ENCODE measurements at regions of chr15 and their contacts with region 1.

Region 1: GRCh38 chr15:20367093-20367492 is 174.5 kb downstream of the GOLGA6L6 start:
- DNase-seq: no peak
- H3K4me3 Mint-ChIP-seq: no peak overlapping the region
- H3K27ac Mint-ChIP-seq: no peak overlapping the region
- H3K4me1 Mint-ChIP-seq: no peaks in the 10 kb centered on the region
- H3K27me3 Mint-ChIP-seq: no peaks in the 10 kb centered on the region

Region 2: GRCh38 chr15:20340931-20341661 is 26.0 kb before region 1 on chr15:
- intact Hi-C with region 1: no loop called
- DNase-seq: no peak
- H3K4me3 Mint-ChIP-seq: no peak overlapping the region
- H3K27ac Mint-ChIP-seq: no peak overlapping the region
- H3K4me1 Mint-ChIP-seq: no peaks in the 10 kb centered on the region
- H3K27me3 Mint-ChIP-seq: no peaks in the 10 kb centered on the region

Region 3: DNA sequence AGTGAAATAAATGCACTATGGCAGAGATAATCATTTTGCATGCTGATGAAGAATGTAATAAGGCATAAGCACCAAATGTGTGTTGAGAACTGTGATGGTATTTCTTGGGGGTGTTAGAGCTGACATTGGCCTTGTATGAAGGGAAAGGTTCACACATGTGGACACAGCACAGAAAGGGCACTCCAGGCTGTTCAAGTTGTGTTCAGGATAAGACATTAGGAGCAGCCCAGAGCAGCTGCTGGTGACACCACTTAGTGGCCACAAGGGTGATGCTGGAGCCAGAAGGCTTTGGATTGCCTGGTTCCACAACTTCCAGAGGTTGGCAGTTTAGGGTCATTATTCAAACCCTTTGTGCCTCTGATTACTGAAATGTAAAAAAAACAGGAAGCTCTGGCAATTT is 19.1 kb after region 1 on chr15:
- intact Hi-C with region 1: loop called (anchors 2 kb)
- DNase-seq: no peak
- H3K4me3 Mint-ChIP-seq: no peak overlapping the region
- H3K27ac Mint-ChIP-seq: no peak overlapping the region
- H3K4me1 Mint-ChIP-seq: no peaks in the 10 kb centered on the region
- H3K27me3 Mint-ChIP-seq: no peaks in the 10 kb centered on the region

Region 4: DNA sequence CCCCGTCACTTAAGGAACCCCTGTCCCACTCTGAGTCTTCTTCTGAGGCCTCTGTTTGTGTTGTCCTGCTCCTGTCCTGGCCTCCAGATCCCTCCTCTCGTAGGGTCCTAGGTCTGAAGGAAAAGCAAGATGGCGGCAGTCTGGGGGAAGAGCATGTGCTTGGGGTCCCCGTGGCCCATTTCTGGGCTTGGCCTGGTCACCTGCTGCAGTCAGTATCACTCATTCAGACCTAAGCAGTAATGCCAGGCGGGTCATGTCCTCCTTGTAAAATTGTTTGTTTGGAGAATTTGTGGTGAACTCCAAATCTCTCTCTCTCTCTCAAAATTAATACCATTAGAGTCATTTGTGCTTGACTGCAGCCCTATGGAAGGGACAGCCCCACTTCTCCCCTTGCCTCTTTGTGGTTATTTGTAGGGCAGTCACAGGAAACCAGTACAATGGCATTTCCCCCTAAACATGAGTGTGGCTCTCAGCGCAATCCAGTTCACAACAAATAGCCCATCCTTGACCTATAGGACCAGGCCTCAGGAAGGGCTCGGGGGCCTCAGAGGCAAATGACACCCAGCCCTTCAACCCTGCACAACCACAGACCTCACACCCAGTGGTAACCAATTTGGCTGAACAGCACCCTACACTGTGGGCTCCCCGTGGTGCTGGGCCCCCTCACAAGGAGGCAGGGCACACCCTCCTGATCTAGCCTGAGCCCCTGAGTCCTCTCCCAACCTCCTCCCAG is 1886.7 kb after region 1 on chr15:
- intact Hi-C with region 1: loop called (anchors 5 kb)
- DNase-seq: no peak
- H3K4me3 Mint-ChIP-seq: no peak overlapping the region
- H3K27ac Mint-ChIP-seq: no peak overlapping the region
- H3K4me1 Mint-ChIP-seq: peaks cover 18% of the 10 kb centered on the region
- H3K27me3 Mint-ChIP-seq: peaks cover 14% of the 10 kb centered on the region

Measured in activated T-helper 1 cell treated with anti-CD3 and anti-CD28 coated beads, Interleukin-12 subunit alpha, Interleukin-12 subunit beta, Interleukin-2, Interleukin-4 antibody, amounts not matched to agents 30 ng/mL and 10 ng/mL and 1 ng/mL, durations not matched to agents 14 hours and 24 hours and 36 hours (primary cell).